OCI-LY7 (cell line): ENCODE measurements at regions of chr16 and their contacts with region 1.

Region 1: GRCh38 chr16:81650982-81651562 is 128.0 kb upstream of the PLCG2 start:
- DNase-seq: no peak
- H3K4me3 ChIP-seq: no peak overlapping the region
- H3K27ac ChIP-seq: no peak overlapping the region
- H3K4me1 ChIP-seq: no peaks in the 10 kb centered on the region
- CTCF ChIP-seq: no peak

Region 2: DNA sequence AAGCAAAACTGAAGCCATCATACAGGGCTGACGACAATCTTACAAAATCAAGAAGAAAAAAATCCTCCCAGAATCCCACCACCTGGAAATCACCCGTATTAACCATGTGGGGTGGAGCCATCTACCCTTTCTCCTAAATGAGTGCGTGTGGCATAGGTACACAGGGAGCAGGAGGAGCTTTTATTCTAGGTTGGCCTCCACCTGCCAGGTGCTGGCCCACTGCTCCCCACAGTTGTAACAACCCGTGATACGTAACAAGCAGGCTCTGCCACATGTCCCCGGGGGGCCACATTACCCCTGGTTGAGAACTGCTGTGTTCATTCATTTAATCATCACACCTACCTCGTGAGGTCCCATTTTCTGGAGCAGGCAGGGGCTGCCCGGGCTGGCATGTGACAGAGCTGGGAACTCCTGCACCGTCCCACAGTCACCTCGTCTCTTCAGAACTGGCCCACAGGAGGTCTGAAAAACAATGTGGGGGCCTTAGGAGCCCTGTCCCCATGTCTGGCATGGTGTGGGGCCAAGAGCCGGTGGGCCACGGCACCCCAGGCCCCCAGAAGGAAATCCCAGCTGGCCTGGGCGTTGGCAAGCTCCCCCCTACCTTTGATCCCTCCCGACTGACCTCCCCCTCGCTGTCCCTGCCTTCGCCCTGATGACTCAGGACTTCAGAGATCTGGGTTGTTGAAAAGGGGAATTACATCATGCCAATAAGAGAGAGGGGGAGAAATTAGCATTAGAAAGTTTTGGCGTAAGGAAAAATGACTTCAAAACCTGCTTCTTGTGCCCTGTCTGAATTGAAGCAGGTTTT is 193.5 kb before region 1 on chr16:
- CTCF ChIA-PET with region 1: no interaction called
- POLR2A ChIA-PET with region 1: no interaction called
- intact Hi-C with region 1: no loop called
- DNase-seq: no peak
- H3K4me3 ChIP-seq: no peak overlapping the region
- H3K27ac ChIP-seq: no peak overlapping the region
- H3K4me1 ChIP-seq: peaks cover 7% of the 10 kb centered on the region
- CTCF ChIP-seq: no peak

Region 3: DNA sequence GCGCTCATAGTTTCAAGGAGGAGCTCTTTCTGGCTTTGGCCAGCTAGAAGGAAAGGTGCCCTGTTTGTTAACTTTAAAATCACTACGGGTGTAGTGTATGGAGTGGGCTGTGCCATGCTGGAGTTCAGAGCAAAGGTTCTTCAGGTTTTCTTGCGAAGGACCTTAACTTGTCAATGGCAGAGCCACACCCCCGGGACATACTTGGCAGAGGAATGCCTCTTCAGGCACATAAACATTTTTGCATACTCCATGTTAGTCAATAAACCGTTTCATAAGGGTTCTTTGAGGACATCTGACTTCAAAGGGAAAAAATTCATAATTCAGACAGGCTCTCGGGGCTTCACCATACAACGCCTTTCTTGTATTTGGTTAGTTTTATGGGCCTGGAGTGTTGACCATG is 15.0 kb after region 1 on chr16:
- CTCF ChIA-PET with region 1: interaction called, 13 read pairs
- POLR2A ChIA-PET with region 1: no interaction called
- intact Hi-C with region 1: no loop called
- DNase-seq: no peak
- H3K4me3 ChIP-seq: no peak overlapping the region
- H3K27ac ChIP-seq: no peak overlapping the region
- H3K4me1 ChIP-seq: no peaks in the 10 kb centered on the region
- CTCF ChIP-seq: no peak

Region 4: DNA sequence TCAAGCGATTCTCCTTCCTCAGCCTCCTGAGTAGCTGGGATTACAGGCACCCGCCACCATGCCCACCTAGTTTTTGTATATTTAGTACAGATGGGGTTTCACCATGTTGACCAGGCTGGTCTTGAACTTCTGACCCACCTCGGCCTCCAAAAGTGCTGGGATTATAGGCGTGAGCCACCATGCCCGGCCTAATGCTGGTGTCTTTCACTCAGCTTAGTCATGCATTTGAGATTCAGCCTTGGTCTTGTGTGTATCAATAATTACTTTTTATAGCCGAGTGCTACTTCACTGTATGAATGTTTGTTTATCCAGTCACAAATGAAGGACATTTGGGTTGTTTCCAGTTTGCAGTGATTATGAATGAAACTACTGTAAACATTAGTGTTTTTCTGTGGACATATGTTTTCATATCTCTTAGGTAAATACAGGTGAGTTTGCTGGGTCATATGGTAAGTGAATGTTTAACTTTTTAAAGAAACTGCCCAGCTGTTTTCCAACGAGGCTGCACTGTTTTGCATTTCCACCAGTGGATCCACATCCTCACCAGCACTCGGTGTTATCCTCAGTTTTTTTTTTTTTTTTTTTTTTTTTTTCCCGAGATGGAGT is 117.0 kb after region 1 on chr16:
- CTCF ChIA-PET with region 1: no interaction called
- POLR2A ChIA-PET with region 1: no interaction called
- intact Hi-C with region 1: no loop called
- DNase-seq: no peak
- H3K4me3 ChIP-seq: no peak overlapping the region
- H3K27ac ChIP-seq: no peak overlapping the region
- H3K4me1 ChIP-seq: peaks cover 26% of the 10 kb centered on the region
- CTCF ChIP-seq: no peak